ENCODE measurements at regions of chr16 and their contacts with region 1.

Region 1: DNA sequence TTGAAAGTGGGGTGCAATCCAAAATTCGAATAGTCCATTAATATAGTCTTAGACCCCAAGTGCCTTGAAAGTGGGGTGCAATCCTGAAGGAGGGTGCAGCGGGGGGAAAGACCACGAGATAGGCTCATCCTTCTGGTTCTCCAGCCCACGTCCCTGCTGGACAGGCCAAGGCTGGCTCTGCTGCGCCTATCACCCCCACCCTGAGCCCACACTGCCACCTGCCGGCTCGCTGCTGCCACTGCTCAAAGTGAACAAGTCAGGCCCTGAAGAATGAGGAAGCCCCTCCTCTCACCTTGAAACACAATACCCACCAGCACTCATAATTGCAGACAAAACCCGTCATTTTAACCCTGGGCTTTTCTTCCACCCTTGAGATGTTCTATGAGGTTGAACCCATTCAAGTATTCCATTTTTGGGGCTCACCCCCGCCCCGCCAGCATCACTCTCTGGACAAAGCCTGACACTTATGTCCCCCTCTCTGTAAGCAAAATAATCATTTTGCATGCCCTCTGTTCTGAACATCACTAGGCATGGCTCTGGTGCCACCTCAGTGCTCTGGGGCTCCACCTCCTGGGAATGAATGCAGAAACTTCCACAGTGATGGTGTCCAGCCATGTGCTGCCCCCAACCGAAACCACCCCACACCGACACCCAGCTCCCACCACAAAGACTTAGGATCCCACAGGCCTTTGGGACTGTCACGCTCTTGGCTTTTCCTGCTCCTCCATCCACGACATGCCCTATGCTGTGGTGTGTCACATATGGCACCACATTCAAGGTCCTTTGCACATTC is 56.8 kb downstream of the BEAN1 start:
- H3K4me3 ChIP-seq: no peak overlapping the region
- H3K27ac ChIP-seq: no peak overlapping the region
- H3K4me1 ChIP-seq: no peaks in the 10 kb centered on the region
- CTCF ChIP-seq: peak; percentile 93

Region 2: GRCh38 chr16:66468321-66468965 is 15.4 kb before region 1 on chr16:
- CTCF ChIA-PET with region 1: no interaction called
- POLR2A ChIA-PET with region 1: no interaction called
- H3K4me3 ChIP-seq: no peak overlapping the region
- H3K27ac ChIP-seq: no peak overlapping the region
- H3K4me1 ChIP-seq: no peaks in the 10 kb centered on the region
- CTCF ChIP-seq: no peak

Region 3: DNA sequence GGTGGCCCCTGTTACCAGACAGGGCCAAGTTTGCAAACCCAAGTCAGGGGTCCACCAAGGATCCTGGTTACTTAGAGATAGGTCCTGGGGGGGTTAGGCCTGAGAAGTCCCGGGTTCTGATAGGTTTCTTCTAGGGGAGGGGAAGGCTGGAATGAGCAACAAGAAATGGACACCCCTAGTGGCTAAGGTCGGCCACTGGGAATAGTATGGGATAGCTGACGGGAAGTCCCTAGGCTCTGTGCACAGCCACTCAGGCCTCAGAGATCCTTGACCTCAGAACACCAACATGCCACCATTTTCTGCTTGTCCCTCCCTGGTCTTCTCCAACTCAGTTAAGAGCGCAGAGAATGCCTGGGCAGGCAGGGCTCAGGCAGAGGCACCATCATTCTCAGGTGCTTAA is 52.6 kb after region 1 on chr16:
- CTCF ChIA-PET with region 1: no interaction called
- POLR2A ChIA-PET with region 1: interaction called, 10 read pairs
- H3K4me3 ChIP-seq: no peak overlapping the region
- H3K27ac ChIP-seq: no peak overlapping the region
- H3K4me1 ChIP-seq: no peaks in the 10 kb centered on the region
- CTCF ChIP-seq: no peak

Measured in HEK293 (cell line).